Right cardiac atrium (tissue), 5 donors: ENCODE measurements at regions of chr10 and their contacts with region 1.

Region 1: GRCh38 chr10:31819391-31819820 is 109.2 kb downstream of the ARHGAP12 start:
- DNase-seq: peak; percentile 50 to 75 (median 69)
- ATAC-seq: peak; percentile 73 to 78
- H3K4me3 ChIP-seq: no peak overlapping the region
- H3K27ac ChIP-seq: no peak overlapping the region
- H3K4me1 ChIP-seq: peaks cover 6% of the 10 kb centered on the region
- H3K27me3 ChIP-seq: no peaks in the 10 kb centered on the region

Region 2: DNA sequence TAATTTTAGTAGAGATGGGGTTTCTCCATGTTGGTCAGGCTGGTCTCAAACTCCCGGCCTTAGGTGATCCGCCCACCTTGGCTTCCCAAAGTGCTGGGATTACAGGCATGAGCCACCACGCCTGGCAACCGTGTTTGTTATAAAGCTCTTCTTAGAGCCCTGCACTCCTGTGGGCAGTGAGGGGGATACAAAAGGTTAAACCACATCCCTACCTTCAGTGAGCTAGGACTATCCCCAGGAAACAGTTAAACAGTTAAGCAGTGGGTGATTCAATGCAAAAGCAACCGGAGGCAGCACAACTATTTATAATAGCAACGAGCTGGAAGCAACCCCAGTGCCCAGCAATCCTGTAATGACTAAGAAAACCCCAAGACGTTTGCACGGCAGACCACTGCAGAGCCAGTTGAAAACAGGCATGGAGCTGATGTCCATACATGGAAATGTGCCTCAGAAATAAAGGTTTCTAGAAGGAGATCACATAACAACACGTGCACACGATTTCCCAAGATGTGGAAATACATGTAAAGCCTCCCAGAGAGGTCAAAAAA is 1082.6 kb before region 1 on chr10:
- intact Hi-C with region 1: loop called in 1 of 4 experiments (anchors 10 kb)
- DNase-seq: peak in 1 of 3 donors; percentile 42
- ATAC-seq: peak; percentile 60 to 80
- H3K4me3 ChIP-seq: no peak overlapping the region
- H3K27ac ChIP-seq: no peak overlapping the region
- H3K4me1 ChIP-seq: no peaks in the 10 kb centered on the region
- H3K27me3 ChIP-seq: no peaks in the 10 kb centered on the region

Region 3: DNA sequence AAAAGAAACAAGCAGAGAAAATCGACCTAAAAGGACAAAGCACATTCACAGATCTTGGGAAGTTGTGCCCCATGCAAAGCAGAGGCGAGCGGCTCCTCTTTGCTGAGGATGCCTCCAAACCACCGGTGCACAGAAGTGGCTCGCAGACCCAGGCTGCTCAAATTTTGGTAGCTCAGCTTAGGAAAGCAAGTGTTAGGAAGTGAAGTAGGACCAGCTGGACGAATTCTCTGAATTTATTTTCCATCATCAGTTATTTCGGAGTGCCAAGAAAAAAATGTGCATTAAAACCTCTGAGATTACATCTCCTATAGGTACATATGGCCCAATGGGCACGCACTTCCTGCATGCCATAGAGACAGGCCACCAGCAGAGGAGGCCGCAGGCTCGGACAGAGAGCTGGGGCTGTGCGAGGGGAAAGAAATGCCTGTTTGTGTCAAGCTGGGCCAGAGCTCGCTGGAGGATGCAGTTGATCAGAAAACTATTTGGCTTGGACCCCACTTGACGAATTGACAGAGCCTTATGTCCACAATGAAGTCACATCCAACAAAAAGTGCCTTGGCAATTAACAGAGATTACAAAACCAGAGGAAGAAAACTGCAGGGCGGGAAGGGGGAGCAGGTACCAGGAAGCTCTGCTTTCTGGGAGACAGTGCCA is 1067.6 kb before region 1 on chr10:
- intact Hi-C with region 1: loop called in 1 of 4 experiments (anchors 10 kb)
- DNase-seq: peak; percentile 77 to 93 (median 91)
- ATAC-seq: peak; percentile 85 to 91
- H3K4me3 ChIP-seq: no peak overlapping the region
- H3K27ac ChIP-seq: peak overlapping the region; percentile 70
- H3K4me1 ChIP-seq: no peaks in the 10 kb centered on the region
- H3K27me3 ChIP-seq: no peaks in the 10 kb centered on the region

Region 4: DNA sequence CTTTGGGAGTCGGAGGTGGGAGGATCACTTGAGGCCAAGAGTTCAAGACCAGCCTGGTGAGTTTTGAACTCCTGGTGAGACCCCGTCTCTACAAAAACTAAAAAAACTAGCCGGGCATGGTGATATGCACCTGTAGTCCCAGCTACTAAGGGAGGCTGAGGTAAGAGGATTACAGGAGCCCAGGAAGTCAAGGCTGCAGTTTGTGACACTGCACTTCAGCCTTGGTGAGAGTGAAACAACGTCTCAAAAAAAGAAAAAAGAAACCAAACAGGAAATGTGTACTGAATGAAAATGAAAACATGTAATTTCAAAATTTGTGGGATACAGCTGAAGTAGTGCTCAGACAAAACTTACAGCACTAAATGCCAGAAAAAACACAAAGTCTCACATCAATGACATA is 101.6 kb after region 1 on chr10:
- intact Hi-C with region 1: no loop called
- DNase-seq: no peak
- ATAC-seq: no peak
- H3K4me3 ChIP-seq: no peak overlapping the region
- H3K27ac ChIP-seq: no peak overlapping the region
- H3K4me1 ChIP-seq: peaks cover 1% of the 10 kb centered on the region
- H3K27me3 ChIP-seq: no peaks in the 10 kb centered on the region